Common myeloid progenitor, CD34-positive (primary cell): ENCODE measurements at regions of chr15 and their contacts with region 1.

Region 1: DNA sequence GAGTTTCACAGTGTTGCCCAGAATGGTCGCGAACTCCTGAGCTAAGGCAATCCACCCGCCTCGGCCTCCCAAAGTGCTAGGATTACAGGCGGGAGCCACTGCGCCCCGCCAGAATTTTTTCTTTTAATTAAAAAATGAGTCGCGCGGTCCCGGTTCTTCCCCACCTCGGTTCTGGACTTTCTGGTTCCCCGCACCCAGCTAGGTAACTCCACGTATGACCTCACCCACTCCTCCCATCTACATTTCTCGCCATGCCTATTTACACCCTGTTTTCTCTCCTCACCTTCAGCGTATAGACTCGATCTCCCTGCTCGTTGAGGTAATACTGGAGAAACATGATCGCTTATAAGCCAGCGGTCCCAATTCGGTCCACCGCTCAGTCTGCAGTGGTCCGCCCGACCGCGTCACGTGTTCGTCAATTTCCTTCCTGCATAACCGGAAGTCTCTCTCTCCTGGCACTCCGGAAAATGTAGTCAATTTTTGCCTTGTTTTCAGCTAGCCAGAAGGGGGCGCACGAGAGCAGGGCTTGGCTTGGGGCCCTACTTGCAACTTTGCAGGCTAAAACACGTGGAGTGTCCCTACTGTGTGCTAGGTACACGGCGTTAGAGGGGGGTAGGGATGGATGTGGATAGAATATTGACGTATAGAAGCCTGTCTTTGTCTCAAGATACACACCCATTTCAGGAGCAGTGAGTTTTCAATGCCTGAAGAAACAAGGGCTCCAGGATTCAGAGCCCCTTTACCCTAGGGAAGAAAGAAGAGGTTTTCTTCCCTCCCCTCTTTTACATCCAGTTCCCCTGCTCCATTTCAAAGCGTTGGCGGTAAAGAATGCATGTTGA is at the starts of genes NOP10 and NUTM1:
- DNase-seq: peak; percentile 95 to 97 (median 97)
- H3K4me3 ChIP-seq: peak within 1 kb of the TSS; percentile 57 to 99 (median 94)
- H3K27ac ChIP-seq: peak within 1 kb of the TSS; percentile 83 to 93
- H3K4me1 ChIP-seq: peaks cover 0 to 19% (median 12%) of the 10 kb centered on the region in 4 experiments
- H3K27me3 ChIP-seq: no peaks in the 10 kb centered on the region

Region 2: DNA sequence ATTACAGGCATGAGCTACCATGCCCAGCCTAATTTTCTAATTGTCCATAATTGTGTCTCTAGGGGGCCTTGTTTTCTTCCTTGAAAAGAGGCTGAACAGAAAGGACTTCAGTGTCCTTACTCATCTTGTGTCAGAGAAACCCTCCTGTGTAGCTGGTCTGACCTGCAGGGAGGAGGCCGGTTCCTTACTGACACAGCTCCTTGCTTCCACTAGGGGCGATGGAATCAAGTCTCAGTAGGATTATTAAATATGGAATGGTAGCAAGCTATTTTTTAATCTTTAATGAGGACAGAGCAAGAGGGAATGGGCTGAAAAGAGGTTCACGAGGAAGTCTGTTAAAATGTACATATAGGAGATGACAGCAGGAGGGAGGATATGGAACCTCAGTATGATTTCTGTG is 15.4 kb after region 1 on chr15:
- CTCF ChIA-PET with region 1: interaction called, 11 read pairs
- POLR2A ChIA-PET with region 1: no interaction called
- DNase-seq: peak in 2 of 3 donors; percentile 33 to 37
- H3K4me3 ChIP-seq: no peak overlapping the region
- H3K27ac ChIP-seq: no peak overlapping the region
- H3K4me1 ChIP-seq: no peaks in the 10 kb centered on the region
- H3K27me3 ChIP-seq: no peaks in the 10 kb centered on the region